ENCODE measurements at regions of chrX and their contacts with region 1.

Region 1: GRCh38 chrX:54529552-54530357 is at the start of gene GNL3L:
- DNase-seq: peak; percentile 75 to 88 (median 81)
- H3K4me3 ChIP-seq: peak within 1 kb of the TSS; percentile 92 to 97 (median 94)
- H3K4me3 Mint-ChIP-seq: peak within 1 kb of the TSS; percentile 87 to 93
- H3K27ac ChIP-seq: peak within 1 kb of the TSS; percentile 81 to 92
- H3K27ac Mint-ChIP-seq: peak within 1 kb of the TSS; percentile 86 to 99 (median 96)
- H3K4me1 ChIP-seq: peaks cover 17 to 24% of the 10 kb centered on the region in 2 donors
- H3K4me1 Mint-ChIP-seq: peaks cover 32% of the 10 kb centered on the region
- H3K27me3 ChIP-seq: no peaks in the 10 kb centered on the region
- H3K27me3 Mint-ChIP-seq: peaks cover 0 to 4% (median 0%) of the 10 kb centered on the region in 3 donors
- CTCF ChIP-seq: no peak
- polyA plus RNA-seq, gene GNL3L: 11.8 to 20.7 (median 18.1) TPM

Region 2: DNA sequence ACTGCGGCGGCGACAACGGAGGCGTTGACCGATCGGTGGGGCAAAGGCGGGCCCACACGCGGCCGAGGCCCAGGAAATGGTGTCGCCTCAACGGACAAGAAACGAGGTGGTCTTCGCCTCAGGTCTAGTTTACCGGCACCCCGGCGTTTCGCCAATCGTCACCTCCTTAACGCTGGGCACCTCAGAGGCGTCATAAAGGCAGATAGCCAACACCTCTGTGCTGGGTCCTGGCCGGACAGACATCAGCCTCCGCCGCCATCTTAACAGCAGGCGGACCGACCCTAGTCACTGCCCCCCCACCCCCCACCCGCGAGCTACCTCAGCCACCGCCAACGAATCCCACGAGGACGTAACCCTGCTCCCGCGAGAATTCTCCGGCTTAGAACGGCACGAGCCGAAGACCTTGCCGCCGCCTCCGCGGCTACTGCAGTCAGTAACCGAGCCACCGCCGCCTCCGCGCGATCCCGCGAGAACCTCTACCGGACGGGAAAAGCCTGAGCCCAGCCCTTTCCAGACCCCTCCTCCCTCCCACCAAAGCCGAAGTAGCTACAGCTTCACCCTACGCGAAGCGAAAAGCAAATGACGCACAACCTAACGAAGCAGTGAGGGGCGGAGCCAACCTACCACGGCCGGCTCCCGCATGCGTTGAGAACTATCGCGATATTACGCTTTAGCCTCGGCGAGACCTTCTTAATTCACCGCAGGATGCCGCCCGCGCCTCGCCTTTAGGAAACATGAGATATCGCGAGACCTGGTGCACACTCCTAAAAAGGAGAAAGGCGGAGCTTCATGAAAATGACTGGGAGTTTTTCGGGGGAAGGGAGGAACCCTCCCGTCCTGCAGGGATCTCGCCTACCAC is 846.0 kb before region 1 on chrX:
- intact Hi-C with region 1: loop called in 1 of 2 experiments (anchors 10 kb)
- DNase-seq: peak; percentile 96 to 97 (median 97)
- H3K4me3 ChIP-seq: peak overlapping the region; percentile 56 to 79 (median 72)
- H3K4me3 Mint-ChIP-seq: peak overlapping the region; percentile 82 to 87
- H3K27ac ChIP-seq: peak overlapping the region; percentile 89 to 97
- H3K27ac Mint-ChIP-seq: peak overlapping the region; percentile 94 to 98 (median 98)
- H3K4me1 ChIP-seq: peaks cover 22 to 28% of the 10 kb centered on the region in 2 donors
- H3K4me1 Mint-ChIP-seq: peaks cover 29% of the 10 kb centered on the region
- H3K27me3 ChIP-seq: no peaks in the 10 kb centered on the region
- H3K27me3 Mint-ChIP-seq: peaks cover 0 to 6% (median 2%) of the 10 kb centered on the region in 3 donors
- CTCF ChIP-seq: no peak

Region 3: DNA sequence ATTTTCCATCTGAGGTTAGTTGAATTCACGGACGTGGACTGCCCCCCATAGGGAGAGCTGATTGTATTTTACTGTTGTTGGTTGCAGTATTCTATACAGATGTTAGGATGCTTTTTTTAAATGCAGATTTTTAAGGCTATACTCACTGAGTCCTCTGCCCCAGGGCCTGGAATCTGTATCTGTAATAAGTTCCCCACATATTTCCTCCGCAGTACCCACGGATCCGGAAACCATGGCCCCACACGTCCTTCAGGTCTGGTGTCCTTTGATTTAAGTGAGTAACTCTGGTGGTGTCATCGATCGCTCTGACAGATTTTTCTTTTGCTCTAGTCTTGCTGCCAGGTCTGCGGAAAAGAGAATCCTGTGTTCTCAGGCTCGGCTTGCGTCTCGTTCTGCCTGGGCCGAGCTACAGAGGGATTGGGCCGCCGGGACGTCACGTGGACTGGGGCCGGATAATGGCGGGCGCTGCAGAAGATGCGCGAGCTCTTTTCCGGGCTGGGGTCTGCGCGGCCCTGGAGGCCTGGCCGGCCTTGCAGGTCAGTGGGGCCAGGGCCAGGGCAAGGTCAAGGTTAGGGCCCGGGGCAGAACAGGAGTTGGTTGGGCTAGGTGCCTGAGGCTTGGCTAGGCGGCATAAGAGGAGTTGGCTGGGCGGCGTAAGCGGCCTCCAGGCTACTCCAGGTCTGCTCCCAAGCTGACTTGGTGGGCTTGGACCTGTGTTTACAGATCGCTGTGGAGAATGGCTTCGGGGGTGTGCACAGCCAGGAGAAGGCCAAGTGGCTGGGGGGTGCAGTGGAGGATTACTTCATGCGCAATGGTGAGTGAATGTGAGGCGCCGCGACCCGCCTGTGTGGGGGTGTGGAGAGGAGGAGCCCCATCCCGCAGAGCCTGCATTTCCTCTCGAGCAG is 89.5 kb before region 1 on chrX and contains the start of gene TSR2:
- intact Hi-C with region 1: loop called in 1 of 2 experiments (anchors 5 kb)
- DNase-seq: peak; percentile 67 to 76 (median 73)
- H3K4me3 ChIP-seq: peak within 1 kb of the TSS; percentile 84 to 94 (median 88)
- H3K4me3 Mint-ChIP-seq: peak within 1 kb of the TSS; percentile 88 to 96
- H3K27ac ChIP-seq: peak within 1 kb of the TSS in 1 of 2 donors; percentile 75
- H3K27ac Mint-ChIP-seq: peak within 1 kb of the TSS; percentile 16 to 90 (median 82)
- H3K4me1 ChIP-seq: peaks cover 12 to 17% of the 10 kb centered on the region in 2 donors
- H3K4me1 Mint-ChIP-seq: peaks cover 14% of the 10 kb centered on the region
- H3K27me3 ChIP-seq: no peaks in the 10 kb centered on the region
- H3K27me3 Mint-ChIP-seq: peaks cover 6 to 11% (median 6%) of the 10 kb centered on the region in 3 donors
- CTCF ChIP-seq: no peak
- polyA plus RNA-seq, gene TSR2: 11.8 to 18.0 (median 13.0) TPM

Region 4: DNA sequence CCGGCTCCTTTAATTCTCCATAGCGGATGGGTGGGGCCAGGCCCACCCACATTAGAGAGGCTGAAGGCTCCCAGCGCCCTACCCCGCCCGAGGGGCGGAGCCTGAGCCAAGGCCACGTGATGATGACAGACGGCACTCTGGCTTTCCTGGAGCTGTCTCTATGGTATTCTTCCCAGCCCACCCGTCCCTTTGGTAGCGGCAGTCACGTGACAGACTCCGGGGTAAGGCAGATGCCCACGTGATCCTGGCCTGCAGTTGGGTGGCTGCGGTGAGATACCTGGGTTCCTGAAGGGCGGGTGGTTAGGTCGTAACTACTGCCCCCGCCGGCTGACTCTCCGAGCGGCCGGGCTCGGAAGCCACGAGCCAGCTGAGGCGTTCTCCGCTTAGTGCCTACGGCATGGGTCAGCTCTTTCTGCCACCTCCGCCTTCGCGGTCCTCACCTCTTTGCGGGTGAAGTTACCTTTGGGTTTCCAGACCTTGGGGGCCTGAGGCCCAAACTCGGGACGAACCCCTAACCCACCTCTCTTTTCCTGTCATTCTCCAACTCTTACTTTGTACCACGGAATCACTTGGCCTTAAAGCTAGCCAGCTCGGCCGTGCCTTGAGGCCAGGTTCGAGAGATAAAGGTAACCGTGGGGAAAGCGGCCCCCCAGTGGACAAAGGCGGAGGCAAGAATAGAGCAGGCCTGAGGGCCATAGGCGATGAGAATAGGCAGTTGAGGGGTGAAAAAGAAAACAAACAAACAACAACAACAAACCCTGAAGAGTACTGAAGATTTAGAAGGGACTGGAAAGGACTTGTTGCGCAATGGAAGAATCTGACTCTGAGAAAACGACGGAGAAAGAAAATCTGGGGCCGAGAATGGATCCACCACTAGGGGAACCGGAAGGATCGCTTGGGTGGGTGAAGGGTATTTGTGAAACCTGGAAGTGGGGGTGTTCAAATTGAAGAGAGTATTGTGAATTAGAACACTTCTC is 1188.1 kb after region 1 on chrX and contains the start of gene RRAGB:
- intact Hi-C with region 1: loop called in 1 of 2 experiments (anchors 10 kb)
- DNase-seq: peak; percentile 87 to 90 (median 87)
- H3K4me3 ChIP-seq: peak within 1 kb of the TSS; percentile 61 to 80 (median 78)
- H3K4me3 Mint-ChIP-seq: peak within 1 kb of the TSS; percentile 84 to 93
- H3K27ac ChIP-seq: peak within 1 kb of the TSS; percentile 85 to 98
- H3K27ac Mint-ChIP-seq: peak within 1 kb of the TSS; percentile 90 to 96 (median 94)
- H3K4me1 ChIP-seq: peaks cover 32 to 47% of the 10 kb centered on the region in 2 donors
- H3K4me1 Mint-ChIP-seq: peaks cover 43% of the 10 kb centered on the region
- H3K27me3 ChIP-seq: no peaks in the 10 kb centered on the region
- H3K27me3 Mint-ChIP-seq: peaks cover 0 to 2% (median 0%) of the 10 kb centered on the region in 3 donors
- CTCF ChIP-seq: peak; percentile 47
- polyA plus RNA-seq, gene RRAGB: 8.7 to 27.8 (median 16.3) TPM

Measured in CD14-positive monocyte (primary cell).